ENCODE measurements at regions of chr20 and their contacts with region 1.

Region 1: DNA sequence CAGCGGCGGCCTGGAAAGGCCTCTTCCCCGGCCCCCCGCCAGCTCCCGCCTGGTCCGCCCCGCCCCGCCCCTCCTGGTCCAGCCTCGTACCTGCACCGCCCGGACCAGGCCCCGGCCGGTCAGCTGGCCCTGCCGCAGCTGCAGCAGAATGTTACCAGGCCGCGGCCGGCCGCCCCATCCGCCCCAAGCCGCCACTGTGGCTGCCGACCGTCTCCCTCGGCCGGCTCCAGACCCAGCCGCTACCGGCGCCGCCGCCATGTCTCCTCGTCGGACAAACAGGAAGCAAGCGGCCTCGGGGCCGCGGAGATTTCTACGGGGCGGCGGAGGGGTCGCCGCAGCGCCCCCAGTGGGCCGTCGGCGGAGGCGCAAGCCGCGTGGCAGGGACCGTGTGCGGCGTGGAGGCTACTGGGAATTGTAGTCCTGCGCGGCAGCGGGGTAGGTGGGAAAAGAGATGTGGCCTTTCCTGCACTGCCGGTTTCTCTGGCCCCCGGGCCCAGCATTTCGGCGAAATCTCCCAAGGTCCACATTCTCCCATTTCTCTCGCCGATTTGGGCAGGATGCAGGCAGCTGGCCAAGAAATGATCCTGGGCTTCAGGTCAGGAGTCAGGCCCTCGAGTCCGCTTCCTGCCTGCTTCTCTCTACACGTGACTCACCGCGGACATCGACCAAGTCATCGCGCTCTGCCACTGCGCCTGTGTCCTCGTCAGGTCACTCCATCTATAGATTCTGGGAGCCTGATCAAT is at the start of gene TRPC4AP:
- DNase-seq: peak; percentile 97
- H3K4me3 Mint-ChIP-seq: peak within 1 kb of the TSS; percentile 91
- H3K27ac Mint-ChIP-seq: peak within 1 kb of the TSS; percentile 95
- H3K4me1 Mint-ChIP-seq: peaks cover 39% of the 10 kb centered on the region
- H3K27me3 Mint-ChIP-seq: no peaks in the 10 kb centered on the region
- total RNA-seq, gene TRPC4AP: 46.4 and 47.8 TPM in 2 replicates

Region 2: DNA sequence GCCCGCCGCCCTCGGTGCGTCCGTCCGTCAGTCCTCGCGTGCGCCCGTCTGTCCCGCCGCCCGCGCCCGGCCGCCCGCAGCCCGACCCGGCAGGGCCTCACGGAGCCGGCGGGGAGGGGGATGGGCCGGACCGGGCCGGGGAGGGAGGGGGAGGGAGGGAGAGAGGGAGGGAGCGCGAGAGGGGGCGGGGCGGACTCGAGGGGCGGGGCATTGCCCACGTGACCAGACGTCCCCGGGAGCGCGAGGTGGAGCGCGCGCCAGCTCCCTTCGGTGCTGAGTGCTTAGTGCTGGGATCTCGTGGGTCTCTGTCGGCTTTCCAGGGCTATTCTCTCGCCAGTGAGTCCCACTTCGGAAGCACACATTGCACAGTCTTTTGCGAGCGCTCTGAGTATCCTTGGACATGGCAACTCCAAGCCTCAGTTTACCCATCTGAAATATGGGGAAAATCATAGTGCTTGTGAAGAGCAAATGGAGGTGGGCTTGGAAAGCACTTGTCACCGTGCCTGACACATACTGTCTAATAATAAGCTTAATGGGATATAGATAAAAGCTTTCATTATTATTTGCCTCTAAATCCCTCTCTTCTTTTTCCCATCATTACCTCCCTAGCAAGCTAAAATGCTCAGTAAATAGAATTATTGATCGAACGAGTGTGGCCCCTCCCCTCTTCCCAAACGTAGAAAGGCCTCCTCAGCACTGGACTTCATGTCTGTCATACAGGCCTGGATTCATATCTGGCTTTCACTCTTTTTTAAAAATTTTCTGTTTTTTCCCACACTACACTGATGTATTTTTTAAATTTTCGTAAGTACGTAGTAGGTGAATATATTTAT is 266.9 kb before region 1 on chr20 and contains the start of gene NCOA6:
- intact Hi-C with region 1: loop called (anchors 1 kb)
- DNase-seq: peak; percentile 92
- H3K4me3 Mint-ChIP-seq: peak within 1 kb of the TSS; percentile 95
- H3K27ac Mint-ChIP-seq: peak within 1 kb of the TSS; percentile 93
- H3K4me1 Mint-ChIP-seq: peaks cover 28% of the 10 kb centered on the region
- H3K27me3 Mint-ChIP-seq: peaks cover 11% of the 10 kb centered on the region
- total RNA-seq, gene NCOA6: 25.1 and 26.8 TPM in 2 replicates

Region 3: DNA sequence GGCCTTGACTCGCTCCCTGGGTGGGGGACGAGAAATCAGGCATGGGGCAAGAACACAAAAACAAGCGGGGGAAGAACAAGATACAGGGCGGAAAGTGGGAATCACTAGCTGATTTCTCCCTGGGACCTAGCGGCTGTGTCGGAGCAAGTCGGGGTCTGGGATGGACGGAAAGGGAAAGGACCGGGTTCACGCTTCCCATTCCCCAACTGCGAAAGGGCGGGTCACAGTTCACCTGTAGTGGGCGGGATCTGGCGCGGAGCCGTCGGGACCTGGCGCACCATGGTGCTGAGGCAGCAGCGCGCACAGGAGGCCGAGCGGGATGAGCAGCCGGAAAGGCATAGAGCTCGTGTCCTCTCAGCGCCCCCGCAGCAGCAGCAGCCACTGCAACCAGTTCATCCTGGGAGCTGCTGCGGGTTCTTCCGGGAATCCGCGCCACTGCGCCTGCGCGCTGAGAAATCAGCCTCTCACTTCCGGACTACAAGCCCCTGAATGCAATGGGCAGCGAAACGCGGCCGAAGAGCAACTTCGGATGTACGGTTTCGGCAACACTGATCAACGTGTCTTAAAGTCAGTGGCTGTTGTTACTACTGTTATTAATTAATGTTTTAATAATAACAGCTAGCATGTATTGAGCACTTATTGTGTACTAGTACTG is 54.4 kb after region 1 on chr20 and contains the start of gene EDEM2:
- intact Hi-C with region 1: loop called (anchors 2 kb)
- DNase-seq: peak; percentile 98
- H3K4me3 Mint-ChIP-seq: peak within 1 kb of the TSS; percentile 91
- H3K27ac Mint-ChIP-seq: peak within 1 kb of the TSS; percentile 89
- H3K4me1 Mint-ChIP-seq: peaks cover 25% of the 10 kb centered on the region
- H3K27me3 Mint-ChIP-seq: peaks cover 3% of the 10 kb centered on the region
- total RNA-seq, gene EDEM2: 19.2 and 21.1 TPM in 2 replicates

Region 4: DNA sequence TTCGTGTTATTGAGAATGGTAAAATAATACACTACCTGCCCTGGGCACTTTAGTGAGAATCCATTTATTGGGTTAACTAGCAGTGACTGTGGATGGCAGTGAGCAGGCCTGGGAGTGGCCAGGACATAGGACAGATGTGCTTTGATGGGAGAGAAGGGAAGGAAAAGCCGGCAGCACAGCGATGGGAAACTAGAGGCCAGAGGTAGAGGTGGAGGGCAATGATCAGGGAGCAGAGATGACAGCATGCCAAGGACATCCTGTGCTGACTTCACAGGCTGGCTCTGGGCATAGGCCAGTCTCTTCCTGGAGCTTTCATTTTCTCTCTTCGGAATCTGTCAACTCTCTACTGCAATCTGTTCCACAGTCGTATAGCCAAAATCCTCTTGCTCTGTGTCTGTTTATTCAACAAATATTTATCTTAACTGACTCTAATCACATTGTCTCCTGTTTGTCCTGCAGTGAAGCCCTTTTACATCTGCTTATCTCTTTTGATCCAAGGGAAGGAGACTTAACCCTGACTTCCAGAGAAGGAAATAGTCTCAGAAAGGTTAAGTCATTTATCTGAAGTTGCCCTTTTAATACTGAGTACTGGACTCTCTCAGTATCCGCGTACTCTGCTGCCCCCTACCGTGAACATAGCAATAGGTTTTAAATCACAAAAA is 115.4 kb after region 1 on chr20:
- intact Hi-C with region 1: loop called (anchors 1 kb)
- DNase-seq: peak; percentile 93
- H3K4me3 Mint-ChIP-seq: no peak overlapping the region
- H3K27ac Mint-ChIP-seq: no peak overlapping the region
- H3K4me1 Mint-ChIP-seq: no peaks in the 10 kb centered on the region
- H3K27me3 Mint-ChIP-seq: no peaks in the 10 kb centered on the region

Region 5: GRCh38 chr20:35252037-35252461 is 159.4 kb after region 1 on chr20:
- intact Hi-C with region 1: loop called (anchors 5 kb)
- DNase-seq: peak; percentile 88
- H3K4me3 Mint-ChIP-seq: peak overlapping the region; percentile 78
- H3K27ac Mint-ChIP-seq: peak overlapping the region; percentile 98
- H3K4me1 Mint-ChIP-seq: peaks cover 28% of the 10 kb centered on the region
- H3K27me3 Mint-ChIP-seq: no peaks in the 10 kb centered on the region

Region 6: DNA sequence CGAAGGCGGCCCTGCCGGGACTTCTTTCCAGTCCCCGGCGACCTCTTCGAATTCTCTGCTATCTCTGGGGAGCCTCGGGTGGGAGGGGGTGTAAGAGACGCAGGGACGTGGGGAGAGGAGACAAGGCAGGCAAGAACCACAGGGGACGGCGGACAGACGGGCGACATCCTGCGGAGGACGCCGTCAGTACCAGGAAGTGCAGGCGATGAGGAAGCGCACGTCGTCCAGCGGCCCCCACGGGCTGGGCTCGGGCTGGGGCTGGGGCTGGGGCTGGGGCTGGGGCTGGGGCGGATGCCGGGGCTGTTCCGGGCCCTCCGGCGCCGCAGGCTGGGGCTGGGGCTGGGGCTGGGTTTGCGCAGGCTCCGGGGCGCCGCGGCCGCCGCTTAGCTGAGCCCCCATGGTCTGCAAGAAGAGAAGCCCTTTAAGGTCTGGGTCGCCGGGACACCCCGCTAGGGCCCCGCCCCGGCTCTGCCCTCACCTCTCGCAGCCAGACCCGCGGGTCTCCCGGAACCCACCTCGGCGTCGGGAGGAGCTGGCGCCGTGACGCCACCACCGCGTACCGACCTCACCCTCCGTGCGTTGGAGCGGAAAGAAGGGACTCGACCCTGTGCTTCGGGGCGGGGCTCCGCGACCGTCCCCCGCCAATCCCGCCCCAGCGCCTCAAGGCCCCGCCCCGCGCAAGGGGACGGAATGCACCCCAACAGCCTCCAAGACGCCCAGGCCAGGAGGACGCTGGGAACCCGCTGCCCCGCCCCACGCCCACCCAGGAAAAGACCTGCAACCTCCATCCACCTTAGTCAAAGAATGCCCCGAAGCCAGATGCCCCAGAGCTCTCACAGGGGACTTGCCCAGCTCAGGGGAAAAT is 185.1 kb after region 1 on chr20 and contains the start of gene MMP24OS:
- intact Hi-C with region 1: loop called (anchors 5 kb)
- DNase-seq: peak; percentile 97
- H3K4me3 Mint-ChIP-seq: peak within 1 kb of the TSS; percentile 99
- H3K27ac Mint-ChIP-seq: peak within 1 kb of the TSS; percentile 97
- H3K4me1 Mint-ChIP-seq: peaks cover 30% of the 10 kb centered on the region
- H3K27me3 Mint-ChIP-seq: no peaks in the 10 kb centered on the region
- total RNA-seq, gene MMP24OS: 26.2 and 27.3 TPM in 2 replicates